Activated T-helper 2 cell treated with anti-CD3 and anti-CD28 coated beads, Interferon-gamma antibody, Interleukin-2, Interleukin-4, amounts not matched to agents 10 μg/mL and 5 μg/mL and 100 μg/mL, durations not matched to agents 14 hours and 24 hours and 36 hours (primary cell): ENCODE measurements at regions of chr19 and their contacts with region 1.

Region 1: DNA sequence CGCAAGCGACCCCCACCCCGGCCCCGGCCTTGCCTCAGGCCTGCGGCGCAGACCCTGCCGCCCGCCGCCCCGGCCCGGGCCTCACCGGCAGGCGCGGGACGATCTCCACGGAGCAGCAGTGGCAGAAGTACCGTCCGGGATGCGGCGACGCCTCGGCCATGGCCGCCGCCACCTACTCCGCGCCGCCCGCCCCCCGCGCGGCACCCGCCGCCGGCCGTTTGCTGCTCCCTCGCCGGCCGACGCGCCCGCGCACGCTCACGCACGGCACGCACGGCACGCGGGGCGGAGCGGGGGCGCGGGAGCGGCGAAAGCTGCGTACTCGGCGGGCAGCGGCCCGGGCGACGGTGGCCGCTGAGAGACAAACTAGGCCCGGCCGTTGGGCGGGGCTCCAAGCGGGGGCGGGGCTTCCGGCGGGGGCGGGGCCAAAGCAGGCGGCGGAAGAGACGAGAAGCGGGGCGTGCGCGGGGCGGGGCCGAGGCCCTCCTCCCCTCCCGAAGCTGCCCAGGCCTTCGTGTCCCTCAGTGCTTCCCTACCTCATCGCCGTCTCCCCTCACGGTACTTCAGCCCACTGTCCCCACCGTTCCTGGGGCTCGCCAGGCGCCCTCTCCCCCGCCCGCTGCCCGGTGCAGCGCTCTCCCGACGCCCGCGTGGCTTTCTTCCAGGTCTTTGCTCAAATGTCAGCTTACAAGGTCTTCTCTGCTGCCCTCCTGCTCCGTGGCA is at the start of gene RNF126:
- DNase-seq: peak; percentile 84
- H3K4me3 Mint-ChIP-seq: peak within 1 kb of the TSS; percentile 97
- H3K27ac Mint-ChIP-seq: peak within 1 kb of the TSS; percentile 92
- H3K4me1 Mint-ChIP-seq: peaks cover 14% of the 10 kb centered on the region
- H3K27me3 Mint-ChIP-seq: no peaks in the 10 kb centered on the region
- total RNA-seq, gene RNF126: 83.2 and 89.4 TPM in 2 replicates

Region 2: DNA sequence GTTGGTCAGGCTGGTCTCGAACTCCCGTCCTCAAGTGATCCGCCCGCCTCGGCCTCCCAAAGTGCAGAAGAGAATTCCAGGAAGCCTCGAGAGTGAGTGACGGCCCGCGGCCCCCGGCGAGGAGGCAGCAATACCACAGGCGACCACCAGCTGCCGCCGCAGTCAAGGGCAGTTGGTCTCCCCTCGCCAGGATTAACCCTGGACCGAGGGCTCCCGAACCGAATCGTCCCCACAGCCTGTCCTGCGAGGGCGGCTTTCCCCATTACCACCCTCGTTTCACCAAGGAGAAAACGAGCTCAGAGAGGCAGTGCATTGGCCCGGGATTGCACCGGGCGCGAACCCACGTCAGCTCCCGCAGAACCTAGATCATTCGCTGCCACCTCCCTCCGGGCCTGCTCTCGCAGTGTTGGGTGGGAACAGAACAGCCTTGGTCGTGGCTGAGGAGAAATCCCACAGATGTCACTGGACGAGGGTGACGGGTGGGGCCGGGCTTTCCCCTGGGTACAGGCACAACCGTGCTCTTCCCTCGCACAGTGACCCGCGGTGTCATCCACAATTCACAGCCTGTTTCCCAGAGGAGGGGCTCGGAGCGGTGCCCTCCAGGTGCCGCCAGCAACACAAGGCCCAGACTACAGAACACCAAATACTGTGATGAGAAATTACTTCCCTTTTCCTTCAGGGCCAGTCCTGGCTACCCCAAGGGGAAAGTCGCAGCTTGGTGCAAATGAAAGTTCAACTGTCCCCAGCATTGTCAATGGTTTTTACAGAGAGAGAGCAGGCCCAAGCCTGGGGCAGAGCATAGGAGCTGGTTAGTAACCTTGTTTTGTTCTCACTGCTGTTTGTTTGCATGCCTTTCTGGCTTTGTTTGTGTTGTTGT is 279.0 kb before region 1 on chr19:
- intact Hi-C with region 1: no loop called
- DNase-seq: no peak
- H3K4me3 Mint-ChIP-seq: peak overlapping the region; percentile 5
- H3K27ac Mint-ChIP-seq: peak overlapping the region; percentile 17
- H3K4me1 Mint-ChIP-seq: peaks cover 19% of the 10 kb centered on the region
- H3K27me3 Mint-ChIP-seq: peaks cover 22% of the 10 kb centered on the region

Region 3: GRCh38 chr19:572140-572742 is 90.9 kb before region 1 on chr19 and contains the start of gene BSG:
- intact Hi-C with region 1: loop called (anchors 1 kb)
- DNase-seq: peak; percentile 99
- H3K4me3 Mint-ChIP-seq: peak within 1 kb of the TSS; percentile 86
- H3K27ac Mint-ChIP-seq: peak within 1 kb of the TSS; percentile 94
- H3K4me1 Mint-ChIP-seq: peaks cover 24% of the 10 kb centered on the region
- H3K27me3 Mint-ChIP-seq: no peaks in the 10 kb centered on the region
- total RNA-seq, gene BSG: 300 and 304 TPM in 2 replicates

Region 4: GRCh38 chr19:680287-681028 is 17.3 kb after region 1 on chr19:
- intact Hi-C with region 1: loop called (anchors 1 kb)
- DNase-seq: peak; percentile 97
- H3K4me3 Mint-ChIP-seq: peak overlapping the region; percentile 88
- H3K27ac Mint-ChIP-seq: peak overlapping the region; percentile 97
- H3K4me1 Mint-ChIP-seq: peaks cover 1% of the 10 kb centered on the region
- H3K27me3 Mint-ChIP-seq: peaks cover 7% of the 10 kb centered on the region

Region 5: DNA sequence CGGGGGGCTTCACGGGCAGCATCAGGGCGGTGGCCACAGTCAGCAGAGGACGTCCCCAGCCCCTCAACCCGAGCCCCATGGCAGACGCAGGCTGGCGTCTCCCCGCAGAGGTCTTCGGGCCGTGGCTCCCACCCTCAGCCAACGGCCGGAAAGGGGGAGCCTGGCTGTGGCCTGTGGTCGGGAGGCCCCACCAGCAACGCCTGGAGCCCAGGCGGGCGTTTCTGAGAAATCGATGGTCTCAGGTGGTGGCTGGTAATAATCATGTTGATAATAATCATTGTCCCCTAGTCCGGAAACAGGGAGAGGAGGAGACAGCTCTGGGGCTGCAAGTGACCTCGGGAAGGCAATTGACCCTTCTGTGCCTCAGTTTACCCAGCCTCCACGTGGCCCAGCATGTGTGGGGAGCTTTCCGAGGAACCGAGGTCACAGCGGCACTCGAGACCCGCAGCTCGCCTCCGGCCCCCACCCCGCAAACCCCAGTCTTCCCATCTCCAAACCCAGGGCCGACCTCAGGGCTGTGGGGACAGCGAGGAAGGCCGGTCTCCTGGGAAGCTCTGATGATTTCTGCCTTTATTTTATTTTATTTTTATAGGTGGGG is 32.3 kb after region 1 on chr19 and contains the start of gene PRSS57:
- intact Hi-C with region 1: no loop called
- DNase-seq: no peak
- H3K4me3 Mint-ChIP-seq: no peak within 1 kb of the TSS
- H3K27ac Mint-ChIP-seq: no peak within 1 kb of the TSS
- H3K4me1 Mint-ChIP-seq: no peaks in the 10 kb centered on the region
- H3K27me3 Mint-ChIP-seq: peaks cover 10% of the 10 kb centered on the region
- total RNA-seq, gene PRSS57: not detected in 2 replicates

Region 6: GRCh38 chr19:734716-735115 is 71.6 kb after region 1 on chr19:
- intact Hi-C with region 1: loop called (anchors 1 kb)
- DNase-seq: no peak
- H3K4me3 Mint-ChIP-seq: no peak overlapping the region
- H3K27ac Mint-ChIP-seq: no peak overlapping the region
- H3K4me1 Mint-ChIP-seq: peaks cover 9% of the 10 kb centered on the region
- H3K27me3 Mint-ChIP-seq: no peaks in the 10 kb centered on the region

Region 7: GRCh38 chr19:925526-926322 is 262.6 kb after region 1 on chr19 and contains the start of gene ARID3A:
- intact Hi-C with region 1: loop called (anchors 10 kb)
- DNase-seq: peak; percentile 77
- H3K4me3 Mint-ChIP-seq: peak within 1 kb of the TSS; percentile 83
- H3K27ac Mint-ChIP-seq: peak within 1 kb of the TSS; percentile 80
- H3K4me1 Mint-ChIP-seq: peaks cover 10% of the 10 kb centered on the region
- H3K27me3 Mint-ChIP-seq: peaks cover under 1% of the 10 kb centered on the region
- total RNA-seq, gene ARID3A: 42.0 and 42.6 TPM in 2 replicates